Posterior vena cava (tissue), 2 donors: ENCODE measurements at regions of chr4 and their contacts with region 1.

Region 1: GRCh38 chr4:105624530-105624929 is 72.1 kb downstream of the ARHGEF38 start:
- DNase-seq: no peak

Region 2: DNA sequence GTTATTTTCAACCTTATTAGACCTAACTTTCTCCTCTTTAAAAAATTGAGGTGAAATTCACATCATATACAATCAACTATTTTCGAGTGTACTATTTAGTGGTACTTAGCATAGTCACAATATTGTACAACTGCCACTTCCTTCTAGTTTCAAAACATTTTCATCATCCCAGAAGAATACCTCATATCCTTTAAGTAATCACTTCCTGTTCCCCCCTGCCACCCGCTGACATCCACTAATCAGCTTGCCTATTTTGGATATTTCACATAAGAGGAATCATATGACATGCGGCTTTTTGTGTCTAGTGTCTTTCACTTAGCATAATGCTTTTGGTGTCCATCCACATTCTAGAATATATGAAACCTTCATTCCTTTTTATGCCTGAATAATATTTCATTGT is 140.7 kb before region 1 on chr4:
- intact Hi-C with region 1: no loop called
- DNase-seq: no peak

Region 3: DNA sequence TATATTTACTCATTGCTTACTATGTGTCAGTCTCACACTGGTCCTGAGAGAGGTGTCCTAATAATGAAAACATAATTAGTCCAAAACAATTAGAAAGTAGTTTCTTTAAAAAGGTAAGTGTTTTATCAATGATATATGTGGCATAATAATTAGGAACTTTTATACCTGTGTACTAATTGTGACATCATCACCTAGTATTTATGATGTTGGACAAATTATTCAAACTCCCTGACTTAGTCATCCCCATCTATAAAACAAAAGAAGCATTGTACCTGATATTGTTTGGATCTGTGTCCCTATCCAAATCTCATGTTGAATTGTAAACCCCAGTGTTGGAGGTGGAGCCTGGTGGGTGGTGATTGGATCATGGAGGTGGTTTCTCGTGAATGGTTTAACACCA is 87.9 kb before region 1 on chr4:
- intact Hi-C with region 1: no loop called
- DNase-seq: no peak

Region 4: DNA sequence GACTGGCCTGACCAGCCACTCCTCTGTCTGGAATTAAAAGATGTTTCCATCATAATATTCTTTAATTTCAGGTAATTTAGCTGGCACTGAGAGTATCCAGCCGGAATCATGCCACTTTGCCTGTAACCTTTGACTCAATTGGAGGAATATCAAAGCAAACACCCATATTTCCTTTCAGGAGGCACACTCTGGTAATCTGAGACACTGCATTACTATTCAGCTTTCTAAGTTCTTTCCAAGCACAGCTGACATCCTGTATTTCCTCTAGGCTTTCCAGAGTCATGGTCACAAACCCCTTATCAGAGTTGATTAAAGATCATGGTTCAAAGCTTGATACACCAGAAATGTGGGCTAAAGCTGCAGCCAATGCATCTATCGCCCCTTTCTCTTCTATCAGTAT is 54.7 kb after region 1 on chr4:
- intact Hi-C with region 1: no loop called
- DNase-seq: no peak

Region 5: GRCh38 chr4:106065018-106065417 is 440.5 kb after region 1 on chr4:
- intact Hi-C with region 1: loop called in 1 of 2 experiments (anchors 5 kb)
- DNase-seq: no peak